ENCODE measurements at regions of chr1 and their contacts with region 1.

Region 1: DNA sequence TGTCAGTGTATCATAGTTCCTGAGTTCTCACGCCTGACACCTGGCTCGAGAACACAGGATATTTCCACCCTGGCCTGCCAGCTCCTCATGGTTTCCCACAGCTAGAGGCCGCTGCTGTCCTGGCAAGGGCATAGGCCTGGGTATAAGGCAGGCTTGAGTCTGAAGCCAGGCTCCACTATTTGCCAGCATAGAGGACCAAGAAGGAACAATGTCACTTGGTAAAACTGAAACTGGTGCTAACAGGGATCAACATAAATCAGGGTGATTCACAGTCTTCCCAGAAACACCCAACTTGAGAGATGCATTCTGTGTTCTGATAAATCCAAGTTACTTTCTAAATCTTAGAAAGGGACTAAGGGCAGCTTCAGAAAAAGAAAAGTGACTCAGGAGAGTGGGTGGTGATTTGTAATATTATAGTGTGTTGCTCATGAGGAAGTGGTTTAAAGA is 6.9 kb upstream of the S100A2 start:
- DNase-seq: peak; percentile 82
- ATAC-seq: peak; percentile 82
- H3K4me3 ChIP-seq: no peak overlapping the region
- H3K27ac ChIP-seq: peak overlapping the region; percentile 36; the same call in 1 of the 2 replicates
- H3K4me1 ChIP-seq: peaks cover 16% of the 10 kb centered on the region
- H3K27me3 ChIP-seq: no peaks in the 10 kb centered on the region
- CTCF ChIP-seq: peak; percentile 86
- POLR2A ChIP-seq: peak; percentile 46; the same call in 1 of the 2 replicates
- RAD21 ChIP-seq: peak; percentile 89

Region 2: DNA sequence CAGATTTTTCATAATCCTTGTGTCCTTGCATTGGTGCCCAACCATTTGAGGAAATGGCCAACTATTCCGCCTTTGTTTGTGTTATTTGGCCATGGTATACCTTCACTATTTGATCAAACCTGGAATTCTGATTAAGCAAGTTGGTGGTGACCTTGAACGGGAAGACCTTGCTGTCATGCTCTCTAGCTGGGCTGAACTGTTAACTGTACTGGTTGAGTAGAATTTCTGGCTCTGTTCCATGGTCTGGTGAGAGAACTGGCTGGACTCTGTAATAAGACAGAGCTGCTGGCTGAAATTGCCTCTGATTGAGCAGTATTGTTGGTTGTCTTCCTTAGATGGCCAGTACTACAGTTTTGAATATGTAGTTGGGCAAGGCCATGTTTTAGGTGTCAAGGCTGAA is 975.6 kb before region 1 on chr1:
- CTCF ChIA-PET with region 1: no interaction called
- POLR2A ChIA-PET with region 1: no interaction called
- dilution Hi-C with region 1: no loop called
- in situ Hi-C with region 1: no loop called
- intact Hi-C with region 1: no loop called
- DNase-seq: no peak
- ATAC-seq: no peak
- H3K4me3 ChIP-seq: no peak overlapping the region
- H3K27ac ChIP-seq: no peak overlapping the region
- H3K4me1 ChIP-seq: no peaks in the 10 kb centered on the region
- H3K27me3 ChIP-seq: no peaks in the 10 kb centered on the region
- CTCF ChIP-seq: no peak
- POLR2A ChIP-seq: no peak
- RAD21 ChIP-seq: no peak

Region 3: GRCh38 chr1:153510984-153511410 is 61.6 kb before region 1 on chr1:
- CTCF ChIA-PET with region 1: interaction called, 15 read pairs
- POLR2A ChIA-PET with region 1: interaction called, 3 read pairs
- dilution Hi-C with region 1: no loop called
- in situ Hi-C with region 1: loop called (anchors 10 kb)
- intact Hi-C with region 1: loop called (anchors 1 kb)
- DNase-seq: peak; percentile 74
- ATAC-seq: peak; percentile 69
- H3K4me3 ChIP-seq: no peak overlapping the region
- H3K27ac ChIP-seq: no peak overlapping the region
- H3K4me1 ChIP-seq: peaks cover 19% of the 10 kb centered on the region
- H3K27me3 ChIP-seq: no peaks in the 10 kb centered on the region
- CTCF ChIP-seq: peak; percentile 97
- POLR2A ChIP-seq: 0 out of 2 replicates have a peak, but pooled peaks have one; percentile 33
- RAD21 ChIP-seq: peak; percentile 97

Region 4: DNA sequence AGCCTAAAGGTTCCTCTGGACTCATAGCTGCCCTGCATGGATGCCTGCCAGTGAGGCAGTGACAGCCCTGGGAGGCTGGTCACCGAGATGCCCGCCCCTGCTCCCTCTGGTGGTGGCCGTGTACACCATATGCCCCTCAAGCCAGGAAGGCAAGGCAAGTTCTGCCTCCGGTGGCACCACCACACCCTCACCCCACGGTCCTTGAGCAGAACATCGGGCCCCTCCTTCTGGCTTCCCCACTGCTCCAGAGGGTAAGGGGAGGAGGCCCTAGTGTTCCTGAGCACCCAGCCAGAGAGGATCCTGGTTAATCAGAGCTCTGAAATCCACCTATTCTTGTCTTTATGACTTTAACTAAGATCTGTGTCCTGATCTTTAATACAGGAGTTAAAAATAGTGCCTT is 45.1 kb after region 1 on chr1:
- CTCF ChIA-PET with region 1: interaction called, 15 read pairs
- POLR2A ChIA-PET with region 1: no interaction called
- dilution Hi-C with region 1: no loop called
- in situ Hi-C with region 1: no loop called
- intact Hi-C with region 1: loop called (anchors 1 kb)
- DNase-seq: no peak
- ATAC-seq: peak; percentile 48
- H3K4me3 ChIP-seq: no peak overlapping the region
- H3K27ac ChIP-seq: no peak overlapping the region
- H3K4me1 ChIP-seq: peaks cover 8% of the 10 kb centered on the region; the same call in 1 of the 2 replicates
- H3K27me3 ChIP-seq: no peaks in the 10 kb centered on the region
- CTCF ChIP-seq: peak; percentile 60
- POLR2A ChIP-seq: no peak; the same call in 1 of the 2 replicates
- RAD21 ChIP-seq: peak; percentile 55

Region 5: DNA sequence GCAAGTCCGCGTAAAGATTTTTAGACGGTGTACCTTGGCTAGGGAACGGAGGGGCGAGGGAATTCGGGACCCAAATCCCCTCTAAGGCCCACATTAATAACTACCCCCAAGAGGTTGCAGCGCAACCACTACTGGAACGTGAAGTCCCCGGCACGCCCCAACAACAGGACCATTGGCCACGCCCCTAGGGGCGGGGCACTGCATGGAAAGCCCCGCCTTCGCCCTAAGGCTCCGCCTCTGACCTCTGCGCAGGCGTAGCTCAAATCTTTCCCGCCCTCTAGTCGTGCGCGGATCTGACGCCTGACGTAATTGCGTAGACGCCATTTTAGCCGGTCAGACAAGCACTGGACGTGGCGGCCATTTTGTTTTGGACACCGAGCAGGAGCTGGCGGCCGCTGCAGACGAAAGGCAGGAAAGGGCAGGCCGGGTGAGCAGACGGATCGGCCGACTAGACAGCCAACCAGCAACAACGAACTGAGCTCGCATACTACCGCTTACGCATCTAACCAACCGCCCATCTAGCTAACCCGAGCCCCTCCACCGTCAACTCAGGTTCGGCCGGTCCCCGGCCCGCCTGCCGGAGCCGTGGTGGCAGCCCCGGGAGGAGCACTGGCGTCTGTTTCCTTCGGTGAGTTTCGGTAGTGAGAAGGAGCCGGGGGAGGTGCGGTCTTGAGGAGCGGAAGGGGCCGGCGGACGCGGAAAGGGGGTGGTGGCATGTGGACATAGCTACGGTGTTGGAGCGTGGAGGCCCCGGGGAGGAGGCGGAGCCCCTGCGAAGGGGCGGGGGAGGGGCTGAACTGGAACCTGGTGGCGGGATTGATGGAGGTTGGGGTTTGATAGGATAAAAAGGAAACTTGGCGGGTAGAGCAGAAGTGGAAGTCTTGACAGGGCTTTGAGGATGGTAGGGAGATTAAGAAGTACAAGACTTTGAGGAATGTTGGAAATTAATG is 61.4 kb after region 1 on chr1 and contains the start of gene CHTOP:
- CTCF ChIA-PET with region 1: interaction called, 6 read pairs
- POLR2A ChIA-PET with region 1: interaction called, 4 read pairs
- dilution Hi-C with region 1: no loop called
- in situ Hi-C with region 1: no loop called
- intact Hi-C with region 1: loop called (anchors 2 kb)
- DNase-seq: peak; percentile 99
- ATAC-seq: peak; percentile 97
- H3K4me3 ChIP-seq: peak within 1 kb of the TSS; percentile 79
- H3K27ac ChIP-seq: peak within 1 kb of the TSS; percentile 98
- H3K4me1 ChIP-seq: peaks cover 3% of the 10 kb centered on the region
- H3K27me3 ChIP-seq: no peaks in the 10 kb centered on the region
- CTCF ChIP-seq: no peak
- POLR2A ChIP-seq: peak; percentile 94
- RAD21 ChIP-seq: no peak; the same call in 1 of the 2 replicates
- total RNA-seq, gene CHTOP: 33.9 and 38.9 TPM in 2 replicates

Region 6: GRCh38 chr1:153658400-153659174 is 86.0 kb after region 1 on chr1 and contains the start of gene SNAPIN:
- CTCF ChIA-PET with region 1: interaction called, 5 read pairs
- POLR2A ChIA-PET with region 1: interaction called, 8 read pairs
- dilution Hi-C with region 1: no loop called
- in situ Hi-C with region 1: no loop called
- intact Hi-C with region 1: loop called (anchors 2 kb)
- DNase-seq: peak; percentile 80
- ATAC-seq: peak; percentile 99
- H3K4me3 ChIP-seq: peak within 1 kb of the TSS; percentile 94
- H3K27ac ChIP-seq: peak within 1 kb of the TSS; percentile 92
- H3K4me1 ChIP-seq: peaks cover 1% of the 10 kb centered on the region
- H3K27me3 ChIP-seq: no peaks in the 10 kb centered on the region
- CTCF ChIP-seq: peak; percentile 28; the same call in 1 of the 2 replicates
- POLR2A ChIP-seq: peak; percentile 42; the same call in 1 of the 2 replicates
- RAD21 ChIP-seq: no peak
- total RNA-seq, gene SNAPIN: 37.2 and 40.9 TPM in 2 replicates

Region 7: GRCh38 chr1:153749408-153750005 is 176.9 kb after region 1 on chr1:
- CTCF ChIA-PET with region 1: no interaction called
- POLR2A ChIA-PET with region 1: no interaction called
- dilution Hi-C with region 1: no loop called
- in situ Hi-C with region 1: no loop called
- intact Hi-C with region 1: loop called (anchors 1 kb)
- DNase-seq: peak; percentile 80
- ATAC-seq: peak; percentile 100
- H3K4me3 ChIP-seq: no peak overlapping the region
- H3K27ac ChIP-seq: no peak overlapping the region
- H3K4me1 ChIP-seq: peaks cover 2% of the 10 kb centered on the region
- H3K27me3 ChIP-seq: no peaks in the 10 kb centered on the region
- CTCF ChIP-seq: peak; percentile 97
- POLR2A ChIP-seq: no peak
- RAD21 ChIP-seq: peak; percentile 91

Measured in IMR-90 (cell line).